HEK293 (cell line): ENCODE measurements at regions of chr6 and their contacts with region 1.

Region 1: DNA sequence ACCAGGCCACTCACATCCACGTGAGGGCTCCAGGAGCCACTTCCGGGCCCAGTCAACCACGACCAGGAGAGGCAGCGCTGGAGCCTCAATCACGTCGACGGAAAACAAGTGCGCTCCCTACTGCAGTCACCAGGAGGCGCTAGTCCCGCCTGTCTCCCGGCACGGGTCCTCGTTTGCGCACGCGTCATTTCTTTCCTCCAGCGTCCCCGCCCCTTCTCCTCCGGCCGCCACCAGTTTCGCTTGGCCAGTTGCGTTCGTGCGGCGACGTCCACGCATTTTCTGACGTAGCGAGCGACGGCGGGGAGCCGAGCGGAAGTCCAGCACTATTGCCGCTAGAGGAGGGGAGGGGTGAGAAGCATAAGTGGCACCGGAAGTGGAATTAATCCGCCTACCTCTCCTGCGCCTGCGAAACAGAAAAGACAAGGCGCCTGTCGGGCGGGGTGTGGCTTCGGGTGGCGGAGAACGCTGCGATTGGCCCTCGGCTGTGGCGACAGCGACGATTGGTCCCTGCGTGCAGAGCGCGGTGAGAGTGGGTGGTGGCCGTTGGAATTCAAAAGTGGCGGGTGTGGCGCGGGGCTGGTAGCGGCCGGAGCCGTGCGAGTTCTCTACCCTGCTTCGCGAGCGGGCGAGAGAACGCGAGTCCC is at the start of gene KIFC1:
- H3K4me3 ChIP-seq: peak within 1 kb of the TSS; percentile 82
- H3K27ac ChIP-seq: peak within 1 kb of the TSS; percentile 80
- H3K4me1 ChIP-seq: peaks cover 10% of the 10 kb centered on the region
- CTCF ChIP-seq: peak; percentile 100

Region 2: DNA sequence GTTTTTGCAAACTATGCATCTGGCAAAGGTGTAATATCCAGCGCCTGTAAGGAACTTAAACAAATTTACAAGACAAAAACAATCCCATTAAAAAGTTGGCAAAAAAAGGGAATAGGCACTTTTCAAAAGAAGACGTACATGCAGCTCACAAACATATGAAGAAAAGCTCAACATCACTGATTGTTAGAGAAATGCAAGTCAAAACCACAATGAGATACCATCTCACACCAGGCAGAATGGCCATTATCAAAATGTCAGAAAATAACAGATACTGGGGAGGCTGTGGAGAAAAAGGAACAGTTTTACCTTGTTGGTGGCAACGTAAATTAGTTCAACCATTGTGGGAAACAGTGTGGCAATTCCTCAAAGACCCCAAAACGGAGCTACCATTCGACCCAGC is 1073.9 kb before region 1 on chr6:
- CTCF ChIA-PET with region 1: no interaction called
- POLR2A ChIA-PET with region 1: no interaction called
- H3K4me3 ChIP-seq: no peak overlapping the region
- H3K27ac ChIP-seq: no peak overlapping the region
- H3K4me1 ChIP-seq: no peaks in the 10 kb centered on the region
- CTCF ChIP-seq: no peak

Region 3: GRCh38 chr6:33367009-33367714 is 24.2 kb before region 1 on chr6:
- CTCF ChIA-PET with region 1: interaction called, 12 read pairs
- POLR2A ChIA-PET with region 1: no interaction called
- H3K4me3 ChIP-seq: no peak overlapping the region
- H3K27ac ChIP-seq: no peak overlapping the region
- H3K4me1 ChIP-seq: peaks cover 5% of the 10 kb centered on the region
- CTCF ChIP-seq: no peak

Region 4: DNA sequence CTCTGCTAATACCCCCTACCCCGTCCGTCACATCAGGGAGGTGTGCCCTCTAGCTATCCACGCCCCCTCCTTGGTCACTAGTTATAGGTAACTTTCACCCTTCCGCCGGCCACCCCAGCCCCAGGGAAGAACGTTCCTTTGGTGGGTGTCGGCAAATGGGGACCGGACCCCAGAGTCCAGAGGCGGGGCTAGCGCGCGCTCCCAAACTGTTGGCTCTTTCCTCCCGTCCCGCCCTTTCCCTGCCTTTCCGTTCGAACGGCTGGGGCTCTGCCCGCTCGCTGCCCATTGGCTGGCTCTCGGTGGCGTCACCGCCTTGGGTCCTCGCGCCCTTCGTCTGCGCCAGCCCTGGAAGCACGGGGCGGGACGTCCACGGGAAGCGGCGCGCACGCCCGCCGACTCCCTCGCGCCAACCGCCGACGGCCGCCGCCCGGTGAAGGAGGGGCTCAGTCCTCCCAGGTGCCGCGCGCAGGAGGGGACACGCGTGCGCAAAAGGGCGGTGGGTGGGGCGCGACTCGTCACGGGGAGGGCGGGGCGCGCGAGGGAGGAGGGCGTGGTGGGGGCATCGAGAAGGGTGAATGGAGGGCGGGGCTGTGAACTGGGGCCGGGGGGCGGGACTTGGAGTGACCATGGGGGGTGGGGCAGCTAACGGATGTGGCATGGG is 18.8 kb after region 1 on chr6:
- CTCF ChIA-PET with region 1: interaction called, 15 read pairs
- POLR2A ChIA-PET with region 1: interaction called, 4 read pairs
- H3K4me3 ChIP-seq: peak overlapping the region; percentile 74
- H3K27ac ChIP-seq: peak overlapping the region; percentile 50
- H3K4me1 ChIP-seq: peaks cover 4% of the 10 kb centered on the region; the same call in 1 of the 2 replicates
- CTCF ChIP-seq: no peak

Region 5: GRCh38 chr6:33417903-33418689 is 26.7 kb after region 1 on chr6 and contains the start of gene CUTA:
- CTCF ChIA-PET with region 1: interaction called, 11 read pairs
- POLR2A ChIA-PET with region 1: no interaction called
- H3K4me3 ChIP-seq: peak within 1 kb of the TSS; percentile 46
- H3K27ac ChIP-seq: peak within 1 kb of the TSS; percentile 67
- H3K4me1 ChIP-seq: no peaks in the 10 kb centered on the region
- CTCF ChIP-seq: peak; percentile 90

Region 6: GRCh38 chr6:33425668-33426577 is 34.5 kb after region 1 on chr6:
- CTCF ChIA-PET with region 1: interaction called, 12 read pairs
- POLR2A ChIA-PET with region 1: no interaction called
- H3K4me3 ChIP-seq: peak overlapping the region; percentile 69
- H3K27ac ChIP-seq: peak overlapping the region; percentile 80
- H3K4me1 ChIP-seq: peaks cover 7% of the 10 kb centered on the region
- CTCF ChIP-seq: peak; percentile 44

Region 7: DNA sequence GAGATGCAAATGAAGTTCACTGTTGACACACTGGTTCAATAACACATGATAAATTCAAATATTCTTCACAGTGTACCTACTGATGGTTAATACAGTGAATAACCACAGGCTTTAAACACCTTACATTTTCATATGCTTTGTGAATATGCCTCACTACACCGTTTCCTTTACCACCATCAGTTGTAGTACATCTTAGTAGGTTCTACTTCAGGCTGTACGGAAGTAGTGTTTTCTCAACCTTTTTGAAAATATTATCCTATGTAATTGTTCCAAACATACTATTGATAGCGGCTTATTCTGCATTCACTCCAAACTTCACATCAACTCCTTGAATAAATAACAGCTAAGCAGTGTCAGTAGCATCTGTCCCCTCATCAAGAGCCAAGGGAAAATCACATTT is 78.3 kb after region 1 on chr6:
- CTCF ChIA-PET with region 1: no interaction called
- POLR2A ChIA-PET with region 1: no interaction called
- H3K4me3 ChIP-seq: no peak overlapping the region
- H3K27ac ChIP-seq: no peak overlapping the region
- H3K4me1 ChIP-seq: no peaks in the 10 kb centered on the region
- CTCF ChIP-seq: no peak